ENCODE measurements at regions of chr6 and their contacts with region 1.

Region 1: DNA sequence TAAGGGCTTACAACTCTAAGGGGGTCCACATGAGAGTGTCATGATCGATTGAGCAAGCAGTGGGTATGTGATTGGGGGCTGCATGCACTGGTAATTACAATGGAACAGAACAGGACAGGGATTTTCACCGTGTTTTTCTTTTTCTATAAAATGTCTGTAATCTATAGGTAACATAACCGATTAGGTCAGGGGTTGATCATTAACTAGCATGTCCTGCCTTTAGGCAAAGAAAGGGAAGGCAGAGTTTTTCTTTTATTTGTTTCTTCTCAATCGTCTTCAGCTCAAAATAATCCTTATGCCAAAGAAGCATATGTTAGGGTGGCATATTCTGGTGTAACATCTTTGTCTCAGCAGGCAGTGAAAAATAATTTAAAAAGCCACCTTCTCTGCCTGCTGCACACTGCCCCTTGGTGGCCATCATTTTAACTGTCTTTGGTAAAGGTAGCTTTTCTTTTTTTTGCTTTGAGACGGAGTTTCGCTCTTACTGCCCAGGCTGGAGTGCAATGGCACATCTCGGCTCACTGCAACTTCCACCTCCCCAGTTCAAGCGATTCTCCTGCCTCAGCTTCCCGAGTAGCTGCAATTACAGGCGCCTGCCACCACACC is 9.7 kb upstream of the CEP43 start:
- DNase-seq: no peak
- H3K4me3 ChIP-seq: no peak overlapping the region
- CTCF ChIP-seq: peak; percentile 51

Region 2: DNA sequence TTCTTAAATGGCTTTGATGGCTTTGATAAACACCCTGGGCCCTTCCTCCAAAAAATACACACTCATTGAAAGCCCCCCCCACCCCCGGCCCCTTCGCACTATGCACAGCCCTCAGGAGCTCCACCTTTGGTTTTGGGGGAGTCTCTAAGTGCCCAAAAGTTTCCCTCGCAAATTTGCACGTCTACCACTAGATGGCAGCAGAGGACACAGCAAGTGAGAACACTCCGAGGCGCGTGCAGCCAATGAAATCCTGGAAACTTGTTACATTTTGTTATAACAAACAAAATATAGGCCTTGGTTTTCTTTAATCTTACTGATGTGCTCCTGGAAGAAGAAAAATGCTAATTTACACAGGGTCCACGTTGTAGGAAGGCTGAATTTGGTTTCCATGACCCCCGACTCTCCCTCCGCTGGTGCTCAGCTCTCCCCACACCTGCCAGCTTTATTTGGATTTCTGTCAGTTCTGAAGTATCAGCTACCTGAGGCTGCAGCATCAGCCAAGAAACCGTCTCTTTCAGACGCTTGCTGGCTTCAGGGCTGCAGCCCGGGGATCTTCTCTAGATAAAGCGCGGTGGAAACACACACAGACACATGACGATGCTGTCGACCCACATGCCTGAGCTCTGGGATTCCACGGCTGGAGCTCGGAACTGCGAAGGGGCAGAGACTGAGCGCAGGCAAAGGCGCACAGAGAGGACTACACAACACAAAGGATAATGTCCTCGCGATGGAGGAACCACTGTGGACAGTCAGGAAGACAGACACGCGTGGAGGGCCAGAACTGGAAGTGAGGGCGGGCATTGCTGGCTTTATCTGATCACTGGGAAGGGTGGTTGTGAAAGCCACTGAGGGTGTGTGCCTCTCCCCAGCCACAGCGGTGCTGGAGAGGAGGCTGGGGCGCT is 214.1 kb before region 1 on chr6:
- CTCF ChIA-PET with region 1: interaction called, 163 read pairs
- POLR2A ChIA-PET with region 1: no interaction called
- DNase-seq: peak; percentile 9
- H3K4me3 ChIP-seq: no peak overlapping the region
- CTCF ChIP-seq: peak; percentile 81

Region 3: GRCh38 chr6:166786704-166787293 is 202.7 kb before region 1 on chr6:
- CTCF ChIA-PET with region 1: interaction called, 163 read pairs
- POLR2A ChIA-PET with region 1: no interaction called
- DNase-seq: peak; percentile 14
- H3K4me3 ChIP-seq: no peak overlapping the region
- CTCF ChIP-seq: peak; percentile 39

Region 4: DNA sequence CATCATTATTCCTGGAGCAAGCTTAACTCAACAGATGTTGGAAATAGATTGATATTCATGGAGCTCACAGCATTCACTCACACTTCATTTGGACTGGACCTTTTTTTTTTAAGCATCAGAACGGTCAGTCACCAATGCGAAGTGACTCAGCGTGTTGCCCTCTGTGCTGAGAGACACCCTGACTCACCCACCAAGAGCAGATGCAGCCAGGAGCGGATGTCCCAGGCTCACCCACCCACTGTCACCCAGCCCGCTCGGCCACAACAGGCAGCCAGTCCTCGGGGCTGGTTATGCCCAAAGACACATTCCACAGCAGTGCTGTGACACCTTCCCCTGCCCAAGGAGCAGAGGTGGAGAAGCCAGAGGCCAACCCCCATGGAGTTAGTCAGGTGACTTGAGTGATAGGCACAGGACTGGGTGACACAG is 48.9 kb before region 1 on chr6:
- CTCF ChIA-PET with region 1: interaction called, 10 read pairs
- POLR2A ChIA-PET with region 1: no interaction called
- DNase-seq: no peak
- H3K4me3 ChIP-seq: no peak overlapping the region
- CTCF ChIP-seq: no peak

Region 5: GRCh38 chr6:166956444-166957086 is 33.0 kb before region 1 on chr6 and contains the start of gene RNASET2:
- CTCF ChIA-PET with region 1: interaction called, 13 read pairs
- POLR2A ChIA-PET with region 1: no interaction called
- DNase-seq: no peak
- H3K4me3 ChIP-seq: peak within 1 kb of the TSS; percentile 75
- CTCF ChIP-seq: no peak

Region 6: GRCh38 chr6:166969390-166970002 is 20.0 kb before region 1 on chr6:
- CTCF ChIA-PET with region 1: interaction called, 16 read pairs
- POLR2A ChIA-PET with region 1: no interaction called
- DNase-seq: no peak
- H3K4me3 ChIP-seq: no peak overlapping the region
- CTCF ChIP-seq: no peak

Region 7: DNA sequence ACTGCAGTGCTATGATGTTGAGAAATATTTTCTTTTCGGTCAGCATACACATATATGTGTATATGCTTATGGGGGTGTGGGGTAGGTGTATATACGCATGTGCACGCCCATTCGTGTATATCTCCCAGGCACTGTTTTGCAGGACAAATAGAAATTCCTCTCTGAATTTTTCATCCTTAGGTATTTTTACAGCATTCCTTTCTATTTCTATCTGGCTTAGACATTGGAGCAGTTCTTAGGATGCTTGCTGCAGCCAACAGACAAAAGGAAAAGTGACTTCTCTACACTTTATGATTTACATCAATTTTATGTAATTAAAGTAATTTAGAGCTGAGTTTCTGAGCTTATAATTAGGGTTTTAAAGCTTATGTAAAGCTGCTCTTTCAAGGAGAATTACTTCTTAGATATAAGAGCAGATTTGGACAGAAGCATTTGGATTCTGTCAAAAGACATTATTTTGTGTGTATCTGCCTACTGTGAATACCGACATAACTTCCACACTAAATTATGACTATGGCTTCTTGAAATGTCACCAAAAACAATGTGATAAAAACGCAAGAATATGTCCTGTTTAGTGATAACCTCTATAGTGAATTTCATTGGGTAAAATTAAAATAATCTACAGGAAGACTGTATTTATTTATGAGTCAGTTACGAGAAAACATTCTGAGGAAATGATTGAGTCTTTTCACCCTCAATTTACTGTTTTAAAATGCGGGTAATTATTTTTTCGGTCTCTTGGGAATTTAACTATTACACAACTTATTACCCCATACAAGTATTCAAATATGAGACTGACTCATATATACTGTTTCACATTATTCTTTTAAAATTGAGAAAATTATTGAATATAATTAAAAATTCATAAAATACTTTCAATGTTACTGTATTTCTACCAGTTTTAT is 11.7 kb before region 1 on chr6:
- CTCF ChIA-PET with region 1: interaction called, 45 read pairs
- POLR2A ChIA-PET with region 1: no interaction called
- DNase-seq: no peak
- H3K4me3 ChIP-seq: no peak overlapping the region
- CTCF ChIP-seq: no peak

Region 8: GRCh38 chr6:167031082-167031709 is 41.7 kb after region 1 on chr6:
- CTCF ChIA-PET with region 1: no interaction called
- POLR2A ChIA-PET with region 1: no interaction called
- DNase-seq: no peak
- H3K4me3 ChIP-seq: no peak overlapping the region
- CTCF ChIP-seq: no peak

Region 9: DNA sequence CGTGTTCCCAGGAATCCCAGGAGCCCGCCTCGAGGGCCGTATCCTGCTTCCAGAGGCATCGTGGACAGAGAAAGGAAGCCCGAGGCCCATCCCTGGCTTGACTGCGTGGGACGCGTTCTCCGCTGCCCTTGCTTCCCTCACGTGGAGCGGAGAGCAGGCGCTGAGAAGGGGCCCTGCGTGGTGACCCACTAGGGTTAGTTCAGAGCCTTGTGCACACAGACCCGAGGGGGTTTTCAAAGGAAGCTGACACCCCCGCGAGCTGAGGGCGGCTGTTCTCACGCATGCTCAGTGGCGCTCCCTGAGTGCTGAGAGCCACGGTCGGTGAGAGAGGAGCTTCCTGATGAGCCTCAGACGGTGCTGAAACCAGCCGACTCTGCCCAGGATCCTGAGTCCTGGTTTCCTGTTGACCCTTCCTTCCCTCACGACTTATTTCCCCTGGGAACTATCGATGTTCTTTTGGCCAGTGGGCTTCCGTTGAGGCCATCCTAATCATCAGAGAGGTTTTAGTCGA is 104.4 kb after region 1 on chr6:
- CTCF ChIA-PET with region 1: no interaction called
- POLR2A ChIA-PET with region 1: no interaction called
- DNase-seq: no peak
- H3K4me3 ChIP-seq: no peak overlapping the region
- CTCF ChIP-seq: no peak

Region 10: DNA sequence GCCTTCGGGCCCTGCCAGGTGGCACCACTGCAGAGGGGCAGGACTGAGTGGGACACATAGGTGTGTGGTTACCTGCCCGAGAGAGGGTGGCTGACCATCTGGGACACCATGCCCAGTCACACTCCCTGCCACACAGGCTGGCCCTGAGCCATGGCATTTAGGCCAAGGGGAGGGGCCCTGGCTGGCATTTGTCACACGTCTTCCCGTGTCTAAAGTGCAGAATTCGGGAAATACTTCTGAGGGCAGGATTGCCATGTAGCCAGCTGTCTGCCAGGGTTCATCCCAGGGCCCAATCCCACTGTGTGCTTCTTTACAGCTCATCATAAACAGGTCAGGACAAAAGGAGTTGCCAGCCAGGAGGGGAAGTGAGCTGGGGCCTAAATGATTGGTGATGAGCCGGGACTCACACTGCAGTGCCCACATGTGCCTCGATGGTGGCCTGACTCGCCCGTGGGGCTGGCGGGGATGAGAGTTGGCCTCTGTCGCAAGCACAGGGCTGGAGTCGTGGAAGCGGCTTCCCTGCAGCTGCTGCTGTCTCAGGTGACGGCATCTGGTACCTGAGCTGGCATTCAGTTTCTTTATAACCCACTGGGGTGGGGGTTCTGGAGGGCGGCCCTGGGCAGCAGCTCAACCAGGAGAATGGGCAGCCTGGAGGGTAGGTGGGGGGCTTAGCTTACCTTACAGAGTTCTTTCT is 295.7 kb after region 1 on chr6:
- CTCF ChIA-PET with region 1: no interaction called
- POLR2A ChIA-PET with region 1: no interaction called
- DNase-seq: no peak
- H3K4me3 ChIP-seq: no peak overlapping the region
- CTCF ChIP-seq: no peak

Region 11: DNA sequence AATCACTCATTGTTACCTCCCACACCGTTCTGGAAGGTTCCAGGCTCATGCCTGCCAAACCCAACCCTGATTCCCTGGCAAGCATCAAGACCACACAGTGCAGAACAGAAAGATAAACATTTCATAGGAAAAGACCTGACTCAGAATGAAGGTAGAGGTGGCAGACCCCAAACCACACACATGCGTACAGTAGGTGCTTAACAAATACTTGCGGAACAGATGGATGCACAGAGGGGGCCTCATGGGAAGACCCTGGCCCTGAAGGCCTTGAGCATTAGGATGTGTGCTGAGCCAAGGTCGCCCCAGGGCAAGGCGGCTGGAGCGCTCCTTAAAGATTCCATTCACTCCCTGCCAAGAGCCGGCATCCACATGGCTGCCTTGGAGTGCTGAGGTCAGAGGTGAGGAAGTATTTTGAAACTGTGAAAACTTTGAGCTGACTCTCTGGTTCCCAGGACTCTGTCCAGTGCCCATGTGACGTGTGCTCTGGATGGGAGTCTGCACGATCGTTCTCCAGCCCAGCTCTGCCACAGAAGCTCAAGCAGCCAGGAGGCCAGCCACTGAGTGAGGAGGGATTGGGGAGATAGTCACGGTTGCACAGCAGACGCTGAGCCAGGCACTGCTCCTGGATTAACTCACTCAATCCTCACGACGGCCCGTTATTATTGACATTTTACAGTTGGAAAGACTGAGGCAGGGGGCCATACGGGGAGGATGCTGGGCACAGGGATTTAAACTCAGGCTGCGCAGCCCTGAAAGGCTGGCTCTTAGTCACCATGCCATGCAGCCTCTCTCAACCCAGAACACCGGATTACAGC is 771.7 kb after region 1 on chr6:
- CTCF ChIA-PET with region 1: no interaction called
- POLR2A ChIA-PET with region 1: no interaction called
- DNase-seq: no peak
- H3K4me3 ChIP-seq: no peak overlapping the region
- CTCF ChIP-seq: no peak